ENCODE measurements at regions of chr15 and their contacts with region 1.

Region 1: DNA sequence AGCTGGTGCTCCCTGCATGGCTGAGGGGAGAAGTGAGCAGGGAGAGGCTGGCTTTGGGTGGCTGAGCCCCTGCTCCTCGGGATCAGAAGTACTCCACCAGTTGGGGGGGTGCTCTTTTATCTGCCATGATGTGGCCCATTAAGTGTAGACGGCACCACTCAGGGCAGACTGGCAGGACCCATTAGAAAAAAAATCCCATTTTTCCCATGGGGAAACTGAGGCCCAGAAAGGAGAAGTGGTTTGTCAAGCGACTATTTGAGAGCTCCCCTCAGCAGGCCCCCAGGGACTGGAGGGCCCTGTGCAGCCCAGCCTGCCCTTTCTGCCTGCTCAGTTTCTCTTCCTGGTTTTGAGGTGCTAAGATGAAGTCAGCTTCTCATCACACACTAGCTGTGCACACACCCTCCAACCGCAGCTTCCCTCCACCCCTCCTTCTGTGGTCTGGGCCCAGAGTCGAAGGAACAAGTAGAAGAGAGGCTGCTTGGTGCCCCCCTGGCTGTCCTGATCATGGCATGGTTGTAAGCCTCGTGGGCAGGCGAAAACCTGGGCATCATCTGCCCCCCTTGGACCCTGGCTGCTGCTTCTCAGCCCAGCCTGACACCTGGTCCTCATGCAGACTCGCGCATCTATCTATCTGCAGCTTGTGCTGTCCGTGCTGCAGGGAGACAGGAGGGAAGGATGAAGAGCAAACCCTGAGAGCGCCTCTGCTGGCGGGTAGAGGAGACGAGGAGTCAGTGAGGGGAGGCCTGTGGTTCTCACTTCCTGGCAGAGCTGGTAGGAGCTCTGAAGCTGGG is 5.6 kb downstream of the CSK start:
- DNase-seq: peak; percentile 98
- ATAC-seq: peak; percentile 57
- H3K4me3 ChIP-seq: peak overlapping the region; percentile 67 to 99 (median 86)
- H3K4me3 Mint-ChIP-seq: peak overlapping the region; percentile 93
- H3K27ac ChIP-seq: peak overlapping the region; percentile 90 to 93
- H3K27ac Mint-ChIP-seq: peak overlapping the region; percentile 99
- H3K4me1 ChIP-seq: peaks cover 61 to 91% of the 10 kb centered on the region in 2 donors
- H3K4me1 Mint-ChIP-seq: peaks cover 94% of the 10 kb centered on the region
- H3K27me3 ChIP-seq: no peaks in the 10 kb centered on the region
- H3K27me3 Mint-ChIP-seq: no peaks in the 10 kb centered on the region
- CTCF ChIP-seq: peak; percentile 75

Region 2: GRCh38 chr15:74433592-74434262 is 353.7 kb before region 1 on chr15 and contains the start of gene SEMA7A:
- CTCF ChIA-PET with region 1: interaction called, 5 read pairs
- POLR2A ChIA-PET with region 1: no interaction called
- intact Hi-C with region 1: loop called (anchors 10 kb)
- DNase-seq: peak; percentile 92
- ATAC-seq: peak; percentile 80
- H3K4me3 ChIP-seq: peak within 1 kb of the TSS; percentile 60 to 89 (median 82)
- H3K4me3 Mint-ChIP-seq: peak within 1 kb of the TSS; percentile 96
- H3K27ac ChIP-seq: peak within 1 kb of the TSS; percentile 75 to 88
- H3K27ac Mint-ChIP-seq: peak within 1 kb of the TSS; percentile 92
- H3K4me1 ChIP-seq: peaks cover 57 to 69% of the 10 kb centered on the region in 2 donors
- H3K4me1 Mint-ChIP-seq: peaks cover 74% of the 10 kb centered on the region
- H3K27me3 ChIP-seq: no peaks in the 10 kb centered on the region
- H3K27me3 Mint-ChIP-seq: no peaks in the 10 kb centered on the region
- CTCF ChIP-seq: no peak
- total RNA-seq, gene SEMA7A: 39.0 and 44.2 TPM in 2 replicates

Region 3: GRCh38 chr15:74709011-74709410 is 78.4 kb before region 1 on chr15:
- CTCF ChIA-PET with region 1: no interaction called
- POLR2A ChIA-PET with region 1: no interaction called
- intact Hi-C with region 1: no loop called
- DNase-seq: no peak
- ATAC-seq: no peak
- H3K4me3 ChIP-seq: no peak overlapping the region
- H3K4me3 Mint-ChIP-seq: no peak overlapping the region
- H3K27ac ChIP-seq: no peak overlapping the region
- H3K27ac Mint-ChIP-seq: no peak overlapping the region
- H3K4me1 ChIP-seq: no peaks in the 10 kb centered on the region
- H3K4me1 Mint-ChIP-seq: no peaks in the 10 kb centered on the region
- H3K27me3 ChIP-seq: peaks cover 0 to 17% (median 2%) of the 10 kb centered on the region in 4 experiments
- H3K27me3 Mint-ChIP-seq: peaks cover 26% of the 10 kb centered on the region
- CTCF ChIP-seq: no peak

Region 4: GRCh38 chr15:74920456-74920855 is 133.0 kb after region 1 on chr15:
- CTCF ChIA-PET with region 1: no interaction called
- POLR2A ChIA-PET with region 1: no interaction called
- intact Hi-C with region 1: no loop called
- DNase-seq: no peak
- ATAC-seq: no peak
- H3K4me3 ChIP-seq: no peak overlapping the region
- H3K4me3 Mint-ChIP-seq: no peak overlapping the region
- H3K27ac ChIP-seq: no peak overlapping the region
- H3K27ac Mint-ChIP-seq: no peak overlapping the region
- H3K4me1 ChIP-seq: no peaks in the 10 kb centered on the region
- H3K4me1 Mint-ChIP-seq: no peaks in the 10 kb centered on the region
- H3K27me3 ChIP-seq: no peaks in the 10 kb centered on the region
- H3K27me3 Mint-ChIP-seq: no peaks in the 10 kb centered on the region
- CTCF ChIP-seq: no peak

Region 5: DNA sequence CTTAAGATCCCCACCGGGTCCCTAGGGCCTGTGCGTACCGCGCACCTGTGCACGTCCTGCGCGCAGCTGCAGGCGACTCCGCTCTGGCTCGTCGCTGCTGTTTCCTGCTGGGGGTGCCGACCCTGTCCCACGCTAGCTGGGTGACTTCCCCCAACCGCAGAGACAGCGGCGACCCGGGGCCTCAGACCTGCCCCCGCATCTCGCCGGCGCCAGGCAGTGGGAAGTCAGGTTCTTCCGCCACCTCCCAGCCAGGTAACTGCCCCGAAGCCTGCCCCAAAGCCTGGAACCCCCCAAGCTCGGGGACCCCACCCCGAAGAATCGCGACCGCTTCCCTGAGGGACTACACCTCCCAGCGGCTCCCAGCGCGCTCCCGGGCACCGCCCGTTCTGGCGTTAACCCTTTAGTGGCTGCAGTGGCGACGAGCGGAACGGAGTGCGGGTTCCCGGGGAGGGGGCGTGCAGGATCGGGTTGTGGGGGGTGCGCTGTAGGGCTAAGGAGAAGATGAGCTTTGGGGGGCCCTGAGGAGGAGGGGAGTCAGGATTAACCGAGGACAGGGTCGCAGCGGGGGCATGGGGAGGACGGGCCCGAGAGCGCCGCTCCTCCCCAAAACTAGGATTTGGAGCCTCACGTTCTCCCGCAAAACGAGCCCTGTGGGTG is 559.9 kb after region 1 on chr15:
- CTCF ChIA-PET with region 1: no interaction called
- POLR2A ChIA-PET with region 1: no interaction called
- intact Hi-C with region 1: loop called (anchors 5 kb)
- DNase-seq: peak; percentile 97
- ATAC-seq: peak; percentile 80
- H3K4me3 ChIP-seq: peak overlapping the region; percentile 3 to 82 (median 70)
- H3K4me3 Mint-ChIP-seq: peak overlapping the region; percentile 80
- H3K27ac ChIP-seq: peak overlapping the region; percentile 92 to 94
- H3K27ac Mint-ChIP-seq: peak overlapping the region; percentile 94
- H3K4me1 ChIP-seq: peaks cover 31 to 47% of the 10 kb centered on the region in 2 donors
- H3K4me1 Mint-ChIP-seq: peaks cover 45% of the 10 kb centered on the region
- H3K27me3 ChIP-seq: no peaks in the 10 kb centered on the region
- H3K27me3 Mint-ChIP-seq: no peaks in the 10 kb centered on the region
- CTCF ChIP-seq: no peak